Activated naive CD4-positive, alpha-beta T cell treated with anti-CD3 and anti-CD28 coated beads for 36 hours (primary cell): ENCODE measurements at regions of chr4 and their contacts with region 1.

Region 1: GRCh38 chr4:78775303-78776030 is 683 bp upstream of the BMP2K start:
- DNase-seq: peak; percentile 84
- H3K4me3 Mint-ChIP-seq: peak overlapping the region; percentile 90
- H3K27ac Mint-ChIP-seq: peak overlapping the region; percentile 95
- H3K4me1 Mint-ChIP-seq: peaks cover 17% of the 10 kb centered on the region
- H3K27me3 Mint-ChIP-seq: no peaks in the 10 kb centered on the region

Region 2: GRCh38 chr4:77586951-77587383 is 1188.5 kb before region 1 on chr4:
- CTCF ChIA-PET with region 1: no interaction called
- intact Hi-C with region 1: loop called (anchors 2 kb)
- DNase-seq: peak; percentile 87
- H3K4me3 Mint-ChIP-seq: peak overlapping the region; percentile 17
- H3K27ac Mint-ChIP-seq: peak overlapping the region; percentile 80
- H3K4me1 Mint-ChIP-seq: peaks cover 49% of the 10 kb centered on the region
- H3K27me3 Mint-ChIP-seq: peaks cover 15% of the 10 kb centered on the region

Region 3: DNA sequence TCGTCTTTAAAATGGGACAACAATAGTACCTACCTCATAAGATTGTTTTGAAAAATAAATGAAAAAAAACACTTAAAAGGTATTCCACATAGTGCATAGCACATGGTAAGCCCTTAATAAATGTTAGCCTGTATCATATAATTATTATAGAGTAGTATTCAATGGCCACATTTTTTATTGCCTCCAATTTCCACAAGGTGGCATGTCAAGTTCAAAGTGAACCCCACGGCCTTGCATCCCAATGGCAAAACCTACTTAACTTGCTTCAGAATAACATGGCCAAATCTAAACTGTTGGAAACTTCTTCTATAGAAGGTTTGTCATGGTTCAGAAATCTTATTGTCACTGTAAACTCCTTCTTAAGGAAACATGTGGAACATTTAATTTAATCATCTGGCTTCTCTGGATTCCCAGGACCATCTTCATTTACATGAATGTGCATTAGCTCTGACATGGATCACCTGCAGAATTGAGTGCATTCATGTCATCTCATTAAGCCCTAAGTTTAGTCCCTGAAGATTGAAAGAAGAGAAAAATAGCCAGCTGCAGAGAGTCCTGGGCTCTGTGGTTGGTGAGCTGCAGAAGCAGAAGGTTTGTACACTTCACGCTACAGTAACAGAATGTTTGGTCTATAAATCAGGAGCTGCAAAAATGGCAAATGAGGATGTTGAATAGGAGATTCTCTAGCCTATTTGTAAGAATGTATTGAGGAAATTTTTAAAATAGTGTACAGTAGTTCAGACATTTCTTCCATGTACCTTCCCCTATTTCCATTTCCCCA is 162.9 kb before region 1 on chr4:
- CTCF ChIA-PET with region 1: no interaction called
- intact Hi-C with region 1: loop called (anchors 1 kb)
- DNase-seq: peak; percentile 42
- H3K4me3 Mint-ChIP-seq: no peak overlapping the region
- H3K27ac Mint-ChIP-seq: no peak overlapping the region
- H3K4me1 Mint-ChIP-seq: peaks cover 39% of the 10 kb centered on the region
- H3K27me3 Mint-ChIP-seq: no peaks in the 10 kb centered on the region

Region 4: GRCh38 chr4:78661921-78662521 is 113.4 kb before region 1 on chr4:
- CTCF ChIA-PET with region 1: interaction called, 3 read pairs
- intact Hi-C with region 1: loop called (anchors 1 kb)
- DNase-seq: peak; percentile 40
- H3K4me3 Mint-ChIP-seq: no peak overlapping the region
- H3K27ac Mint-ChIP-seq: no peak overlapping the region
- H3K4me1 Mint-ChIP-seq: peaks cover 57% of the 10 kb centered on the region
- H3K27me3 Mint-ChIP-seq: no peaks in the 10 kb centered on the region

Region 5: DNA sequence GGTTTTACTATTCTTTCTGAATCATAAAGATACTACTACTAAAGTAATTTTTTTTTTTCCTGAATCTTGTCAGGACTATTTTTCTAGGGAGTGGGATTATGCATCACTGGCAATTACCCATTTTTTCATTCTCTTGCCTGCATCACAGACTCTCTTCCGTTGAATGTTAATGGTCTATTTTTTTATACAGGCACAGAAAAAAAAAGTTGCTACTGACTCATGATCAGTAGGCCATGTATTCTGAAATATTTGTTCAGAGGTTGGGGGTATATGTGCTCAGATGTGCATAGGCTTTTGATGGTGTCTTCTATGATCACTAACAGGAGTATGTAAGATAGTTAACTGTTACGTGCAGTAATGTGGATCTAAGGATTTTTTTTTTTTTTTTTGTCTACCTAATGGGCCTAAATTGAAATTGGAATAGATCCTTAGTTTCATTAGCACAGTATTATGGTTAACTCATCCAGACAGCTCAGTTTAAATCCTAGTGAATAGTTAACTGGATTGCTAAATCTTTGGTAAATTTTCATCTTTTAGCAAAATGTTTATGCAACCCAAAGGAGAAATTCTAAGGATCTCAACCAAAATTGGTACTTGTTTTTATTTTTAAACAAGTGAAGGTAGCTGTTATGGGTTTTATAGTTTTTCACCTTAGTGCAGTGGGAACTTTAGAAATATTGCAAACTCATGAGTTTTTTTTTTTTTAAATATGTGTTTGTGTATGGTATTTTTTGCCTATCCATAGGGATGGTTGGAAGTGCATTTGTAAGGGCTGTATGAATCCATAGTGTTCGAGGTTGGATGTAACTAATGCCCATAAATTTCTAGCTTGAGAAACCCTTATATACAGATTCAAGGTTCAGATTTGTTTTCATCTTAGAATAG is 12.8 kb after region 1 on chr4:
- CTCF ChIA-PET with region 1: interaction called, 3 read pairs
- intact Hi-C with region 1: loop called (anchors 1 kb)
- DNase-seq: no peak
- H3K4me3 Mint-ChIP-seq: no peak overlapping the region
- H3K27ac Mint-ChIP-seq: no peak overlapping the region
- H3K4me1 Mint-ChIP-seq: peaks cover 13% of the 10 kb centered on the region
- H3K27me3 Mint-ChIP-seq: no peaks in the 10 kb centered on the region

Region 6: DNA sequence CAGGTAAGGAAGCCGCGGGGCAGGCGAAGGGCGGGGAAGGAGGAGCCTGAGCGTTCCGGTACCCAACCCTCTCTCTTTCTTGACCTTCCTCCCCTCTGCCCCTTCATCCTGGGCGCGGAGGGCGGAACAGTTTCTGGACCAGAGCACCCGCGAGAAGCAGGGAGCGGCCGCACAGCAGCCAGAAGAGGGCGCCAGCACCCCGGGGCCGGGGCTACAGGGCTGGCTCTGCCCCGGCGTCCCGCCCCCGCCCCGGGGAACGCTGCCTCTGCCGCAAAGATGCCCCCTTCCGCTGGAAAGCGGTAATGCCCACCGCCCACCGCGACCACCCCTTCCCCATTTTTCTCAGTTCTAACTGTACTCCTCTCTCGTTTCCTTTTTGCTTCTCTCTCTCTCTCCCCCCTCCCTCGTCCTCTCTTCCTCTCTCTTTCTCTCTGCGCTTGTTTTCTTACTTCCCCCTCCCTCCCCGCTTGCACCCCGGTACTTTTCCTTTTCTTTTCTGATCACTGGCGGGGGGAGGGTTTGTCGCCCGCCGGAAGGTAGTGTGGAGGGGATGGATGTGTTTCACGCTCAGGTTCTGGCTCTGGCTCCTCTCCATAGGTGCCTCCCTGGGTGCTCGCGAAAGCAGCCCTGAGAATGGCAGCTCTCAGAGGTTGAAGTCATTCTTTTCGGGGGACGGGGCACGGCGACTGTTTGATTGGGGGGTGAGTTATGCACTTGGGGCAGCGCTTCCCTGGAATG is 1408.8 kb after region 1 on chr4:
- CTCF ChIA-PET with region 1: no interaction called
- intact Hi-C with region 1: loop called (anchors 5 kb)
- DNase-seq: peak; percentile 90
- H3K4me3 Mint-ChIP-seq: peak overlapping the region; percentile 97
- H3K27ac Mint-ChIP-seq: peak overlapping the region; percentile 70
- H3K4me1 Mint-ChIP-seq: peaks cover 46% of the 10 kb centered on the region
- H3K27me3 Mint-ChIP-seq: peaks cover 11% of the 10 kb centered on the region